Thyroid gland (tissue), 4 donors: ENCODE measurements at regions of chr3 and their contacts with region 1.

Region 1: DNA sequence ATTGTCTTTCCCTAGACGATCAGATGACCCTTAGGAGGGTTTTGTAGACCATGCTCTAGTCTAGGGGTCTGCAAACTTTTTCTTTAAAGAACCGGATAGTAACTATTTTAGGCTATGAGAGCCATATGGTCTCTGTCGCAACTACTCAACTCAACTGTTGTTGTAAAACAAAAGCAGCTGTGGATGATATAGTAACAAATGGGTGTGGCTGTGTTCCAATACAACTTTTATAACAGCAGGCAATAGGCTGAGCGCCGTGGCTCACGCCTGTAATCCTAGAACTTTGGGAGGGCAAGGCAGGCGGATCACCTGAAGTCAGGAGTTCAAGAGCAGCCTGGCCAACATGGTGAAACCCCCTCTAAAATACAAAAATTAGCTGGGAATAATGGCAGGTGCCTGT is 6.1 kb upstream of the CMTM6 start:
- DNase-seq: no peak
- H3K4me3 ChIP-seq: no peak overlapping the region
- H3K27ac ChIP-seq: no peak overlapping the region
- H3K4me1 ChIP-seq: no peaks in the 10 kb centered on the region
- H3K27me3 ChIP-seq: no peaks in the 10 kb centered on the region
- CTCF ChIP-seq: no peak
- POLR2A ChIP-seq: no peak

Region 2: GRCh38 chr3:32667122-32667521 is 158.4 kb after region 1 on chr3:
- intact Hi-C with region 1: loop called (anchors 5 kb)
- DNase-seq: no peak
- H3K4me3 ChIP-seq: no peak overlapping the region
- H3K27ac ChIP-seq: no peak overlapping the region
- H3K4me1 ChIP-seq: no peaks in the 10 kb centered on the region
- H3K27me3 ChIP-seq: no peaks in the 10 kb centered on the region
- CTCF ChIP-seq: no peak
- POLR2A ChIP-seq: no peak